Mammary epithelial cell (primary cell): ENCODE measurements at regions of chr5 and their contacts with region 1.

Region 1: GRCh38 chr5:107673368-107674136 is 2.8 kb upstream of the EFNA5 start:
- DNase-seq: peak; percentile 82
- H3K4me3 ChIP-seq: peak overlapping the region; percentile 52 to 92 (median 56)
- H3K27ac ChIP-seq: peak overlapping the region; percentile 84
- H3K4me1 ChIP-seq: peaks cover 22% of the 10 kb centered on the region
- H3K27me3 ChIP-seq: no peaks in the 10 kb centered on the region
- CTCF ChIP-seq: peak; percentile 95 to 99

Region 2: DNA sequence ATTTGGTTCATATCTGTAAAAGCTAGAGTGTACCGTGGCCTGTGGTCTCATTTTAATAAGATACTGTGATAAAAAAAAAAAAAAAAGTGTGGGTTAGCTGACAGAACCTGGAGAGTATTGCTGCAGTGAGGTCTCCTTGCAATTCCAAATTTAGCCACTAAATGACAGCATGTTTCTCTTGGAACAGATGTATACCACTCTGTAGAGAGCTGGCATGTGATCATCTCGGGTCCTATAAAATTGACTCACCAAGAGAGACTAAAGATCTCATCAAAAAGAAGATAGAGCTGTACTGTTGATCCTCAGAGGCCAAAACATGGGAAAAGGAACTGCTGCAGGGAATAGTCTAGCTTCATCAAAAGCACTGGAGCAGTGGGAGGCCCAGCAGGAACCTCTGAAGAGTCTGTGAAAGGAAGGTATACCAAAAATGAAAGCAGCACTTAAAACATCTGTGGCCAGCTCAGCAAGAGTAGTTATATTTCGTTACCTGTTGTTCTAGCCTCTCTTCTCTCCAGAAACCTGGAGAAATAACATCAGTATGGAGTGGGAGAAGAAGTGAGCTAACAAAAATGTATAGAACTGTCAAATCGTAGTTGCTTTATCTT is 829.6 kb before region 1 on chr5:
- CTCF ChIA-PET with region 1: no interaction called
- dilution Hi-C with region 1: no loop called
- in situ Hi-C with region 1: no loop called
- intact Hi-C with region 1: loop called (anchors 5 kb)
- DNase-seq: peak; percentile 26
- H3K4me3 ChIP-seq: no peak overlapping the region
- H3K27ac ChIP-seq: no peak overlapping the region
- H3K4me1 ChIP-seq: no peaks in the 10 kb centered on the region
- H3K27me3 ChIP-seq: no peaks in the 10 kb centered on the region
- CTCF ChIP-seq: peak; percentile 35 to 43

Region 3: GRCh38 chr5:107289030-107289714 is 384.4 kb before region 1 on chr5:
- CTCF ChIA-PET with region 1: no interaction called
- dilution Hi-C with region 1: no loop called
- in situ Hi-C with region 1: loop called in 1 of 2 experiments (anchors 10 kb)
- intact Hi-C with region 1: no loop called
- DNase-seq: peak; percentile 85
- H3K4me3 ChIP-seq: no peak overlapping the region
- H3K27ac ChIP-seq: no peak overlapping the region
- H3K4me1 ChIP-seq: peaks cover 22% of the 10 kb centered on the region
- H3K27me3 ChIP-seq: no peaks in the 10 kb centered on the region
- CTCF ChIP-seq: no peak

Region 4: DNA sequence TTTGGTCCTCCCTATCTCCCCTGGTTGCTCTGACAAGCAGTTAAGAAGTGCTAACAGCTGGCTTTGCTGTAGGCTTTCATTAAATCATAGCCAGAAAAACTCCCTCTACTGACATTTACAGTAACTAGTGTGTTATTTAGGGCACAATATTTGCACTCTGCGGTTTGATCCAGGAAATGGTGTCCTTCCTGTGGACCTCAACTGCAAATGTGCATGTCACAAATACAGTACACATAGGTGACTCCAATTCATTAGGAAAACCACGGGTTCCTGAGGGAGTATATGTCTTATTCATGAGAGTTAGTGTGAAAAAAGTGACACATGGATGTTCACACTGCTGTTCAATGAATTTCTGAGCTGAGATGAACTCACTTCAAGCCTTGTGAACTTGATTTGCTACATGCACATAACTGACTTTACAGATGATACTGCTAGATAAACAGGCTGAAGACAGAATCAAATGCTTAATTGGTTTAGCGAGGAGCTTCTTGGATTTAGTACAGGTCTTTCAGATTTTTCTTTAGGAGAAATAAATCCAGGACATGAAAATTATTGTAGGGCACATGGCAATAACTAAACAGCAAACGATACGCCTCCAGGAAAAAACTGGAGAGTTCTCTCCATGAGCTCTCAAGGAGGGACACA is 284.3 kb before region 1 on chr5:
- CTCF ChIA-PET with region 1: no interaction called
- dilution Hi-C with region 1: no loop called
- in situ Hi-C with region 1: loop called in 1 of 2 experiments (anchors 25 kb)
- intact Hi-C with region 1: loop called (anchors 5 kb)
- DNase-seq: peak; percentile 51
- H3K4me3 ChIP-seq: no peak overlapping the region
- H3K27ac ChIP-seq: peak overlapping the region; percentile 92
- H3K4me1 ChIP-seq: peaks cover 32% of the 10 kb centered on the region
- H3K27me3 ChIP-seq: no peaks in the 10 kb centered on the region
- CTCF ChIP-seq: peak in 1 of 2 donors; percentile 17

Region 5: GRCh38 chr5:107418071-107418470 is 255.5 kb before region 1 on chr5:
- CTCF ChIA-PET with region 1: no interaction called
- dilution Hi-C with region 1: no loop called
- in situ Hi-C with region 1: no loop called
- intact Hi-C with region 1: no loop called
- DNase-seq: no peak
- H3K4me3 ChIP-seq: no peak overlapping the region
- H3K27ac ChIP-seq: no peak overlapping the region
- H3K4me1 ChIP-seq: peaks cover 4% of the 10 kb centered on the region
- H3K27me3 ChIP-seq: no peaks in the 10 kb centered on the region
- CTCF ChIP-seq: no peak

Region 6: GRCh38 chr5:107456281-107456715 is 217.3 kb before region 1 on chr5:
- CTCF ChIA-PET with region 1: no interaction called
- dilution Hi-C with region 1: loop called (anchors 25 kb)
- in situ Hi-C with region 1: loop called in 1 of 2 experiments (anchors 25 kb)
- intact Hi-C with region 1: loop called (anchors 2 kb)
- DNase-seq: peak; percentile 89
- H3K4me3 ChIP-seq: no peak overlapping the region
- H3K27ac ChIP-seq: peak overlapping the region; percentile 70
- H3K4me1 ChIP-seq: peaks cover 37% of the 10 kb centered on the region
- H3K27me3 ChIP-seq: no peaks in the 10 kb centered on the region
- CTCF ChIP-seq: no peak

Region 7: GRCh38 chr5:107557051-107557658 is 116.4 kb before region 1 on chr5:
- CTCF ChIA-PET with region 1: no interaction called
- dilution Hi-C with region 1: no loop called
- in situ Hi-C with region 1: no loop called
- intact Hi-C with region 1: loop called (anchors 5 kb)
- DNase-seq: peak; percentile 85
- H3K4me3 ChIP-seq: no peak overlapping the region
- H3K27ac ChIP-seq: peak overlapping the region; percentile 91
- H3K4me1 ChIP-seq: peaks cover 51% of the 10 kb centered on the region
- H3K27me3 ChIP-seq: no peaks in the 10 kb centered on the region
- CTCF ChIP-seq: peak in 1 of 2 donors; percentile 3

Region 8: DNA sequence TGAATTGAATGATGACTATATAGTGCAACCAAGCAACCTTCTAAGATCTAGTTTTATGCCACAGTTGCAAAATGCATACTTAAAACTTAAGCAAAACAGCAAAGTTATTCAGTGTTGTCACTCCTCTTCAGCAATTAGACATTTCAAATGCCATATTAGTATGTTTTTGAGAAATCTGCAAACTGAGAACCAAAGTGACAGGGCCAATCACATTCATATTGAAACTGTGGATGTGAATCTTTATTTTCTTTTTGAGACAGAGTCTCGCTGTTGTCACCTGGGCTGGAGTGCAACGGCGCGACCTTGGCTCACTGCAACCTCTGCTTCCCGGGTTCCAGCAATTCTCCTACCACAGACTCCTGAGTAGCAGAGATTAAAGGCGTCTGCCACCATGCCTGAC is 246.4 kb after region 1 on chr5:
- CTCF ChIA-PET with region 1: no interaction called
- dilution Hi-C with region 1: no loop called
- in situ Hi-C with region 1: no loop called
- intact Hi-C with region 1: no loop called
- DNase-seq: no peak
- H3K4me3 ChIP-seq: no peak overlapping the region
- H3K27ac ChIP-seq: no peak overlapping the region
- H3K4me1 ChIP-seq: no peaks in the 10 kb centered on the region
- H3K27me3 ChIP-seq: no peaks in the 10 kb centered on the region
- CTCF ChIP-seq: no peak

Region 9: DNA sequence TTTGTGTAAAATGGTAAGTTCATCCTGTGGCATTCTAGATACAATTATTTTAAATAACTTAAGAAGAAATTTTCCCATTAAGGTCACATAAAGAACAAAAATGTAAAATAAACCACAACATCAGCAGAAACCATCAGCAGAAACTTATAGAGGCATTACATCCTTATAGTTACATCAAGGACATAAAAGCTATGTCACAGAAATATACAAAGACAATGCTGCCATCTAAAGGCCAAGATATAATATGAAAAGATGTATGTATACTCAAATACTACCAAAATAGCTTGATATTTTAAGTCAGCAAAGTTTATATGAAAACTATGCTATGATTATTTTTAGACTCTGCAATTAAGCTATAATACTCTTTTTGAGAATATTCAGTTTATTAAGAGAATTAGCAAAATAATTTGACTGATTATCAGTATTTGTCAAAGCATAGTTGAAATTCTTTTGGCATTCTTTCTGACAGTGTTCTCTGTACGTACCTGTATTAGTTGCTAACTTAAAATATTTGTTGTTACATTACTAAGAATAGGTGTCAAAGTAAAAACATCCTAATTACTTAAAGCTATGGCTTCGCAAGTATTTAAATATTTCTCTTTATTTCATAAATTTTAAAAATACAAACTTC is 672.1 kb after region 1 on chr5:
- CTCF ChIA-PET with region 1: no interaction called
- dilution Hi-C with region 1: no loop called
- in situ Hi-C with region 1: no loop called
- intact Hi-C with region 1: loop called (anchors 10 kb)
- DNase-seq: peak; percentile 28
- H3K4me3 ChIP-seq: no peak overlapping the region
- H3K27ac ChIP-seq: no peak overlapping the region
- H3K4me1 ChIP-seq: no peaks in the 10 kb centered on the region
- H3K27me3 ChIP-seq: no peaks in the 10 kb centered on the region
- CTCF ChIP-seq: peak; percentile 27 to 34